OCI-LY7 (cell line): ENCODE measurements at regions of chr1 and their contacts with region 1.

Region 1: GRCh38 chr1:44775078-44775929 is at the start of gene RPS8:
- DNase-seq: peak; percentile 95
- H3K4me3 ChIP-seq: peak within 1 kb of the TSS; percentile 99
- H3K27ac ChIP-seq: peak within 1 kb of the TSS; percentile 68
- H3K4me1 ChIP-seq: peaks cover 32% of the 10 kb centered on the region
- CTCF ChIP-seq: no peak
- total RNA-seq, gene RPS8: 4,149 and 4,355 TPM in 2 replicates

Region 2: GRCh38 chr1:44739361-44740178 is 35.7 kb before region 1 on chr1 and contains the start of gene KIF2C:
- CTCF ChIA-PET with region 1: no interaction called
- POLR2A ChIA-PET with region 1: interaction called, 9 read pairs
- intact Hi-C with region 1: loop called (anchors 2 kb)
- DNase-seq: peak; percentile 98
- H3K4me3 ChIP-seq: peak within 1 kb of the TSS; percentile 98
- H3K27ac ChIP-seq: peak within 1 kb of the TSS; percentile 81
- H3K4me1 ChIP-seq: peaks cover 28% of the 10 kb centered on the region
- CTCF ChIP-seq: no peak
- total RNA-seq, gene KIF2C: 150 and 159 TPM in 2 replicates

Region 3: DNA sequence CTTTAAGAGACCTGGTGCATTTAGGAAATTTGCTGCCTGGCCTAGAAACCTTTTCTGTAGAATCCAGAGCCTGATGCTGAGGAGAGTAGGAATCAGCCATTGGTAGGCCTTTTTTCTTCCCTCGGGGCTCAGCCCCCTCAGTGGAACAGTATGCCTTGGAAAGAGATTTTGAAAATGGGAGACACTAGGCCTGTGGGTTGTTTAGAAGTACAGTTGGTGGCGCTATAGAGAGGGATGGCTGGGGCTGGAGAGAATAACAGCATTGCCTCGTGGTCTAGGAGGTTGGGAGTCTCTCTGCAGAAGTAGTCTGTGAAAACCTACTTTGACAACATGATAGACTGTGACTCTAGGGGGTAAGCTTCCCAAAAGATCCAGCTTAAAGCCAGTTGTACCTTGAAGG is 27.4 kb before region 1 on chr1:
- CTCF ChIA-PET with region 1: no interaction called
- POLR2A ChIA-PET with region 1: interaction called, 12 read pairs
- intact Hi-C with region 1: no loop called
- DNase-seq: no peak
- H3K4me3 ChIP-seq: no peak overlapping the region
- H3K27ac ChIP-seq: no peak overlapping the region
- H3K4me1 ChIP-seq: peaks cover 11% of the 10 kb centered on the region
- CTCF ChIP-seq: peak; percentile 39; the same call in 1 of the 2 replicates